Activated T-helper 1 cell treated with anti-CD3 and anti-CD28 coated beads, Interleukin-12 subunit alpha, Interleukin-12 subunit beta, Interleukin-2, Interleukin-4 antibody, amounts not matched to agents 30 ng/mL and 10 ng/mL and 1 ng/mL, durations not matched to agents 14 hours and 24 hours and 36 hours (primary cell): ENCODE measurements at regions of chr18 and their contacts with region 1.

Region 1: GRCh38 chr18:36067055-36067957 is at the start of gene RPRD1A:
- DNase-seq: peak; percentile 94
- H3K4me3 Mint-ChIP-seq: peak within 1 kb of the TSS; percentile 90
- H3K27ac Mint-ChIP-seq: peak within 1 kb of the TSS; percentile 91
- H3K4me1 Mint-ChIP-seq: peaks cover 31% of the 10 kb centered on the region
- H3K27me3 Mint-ChIP-seq: peaks cover 3% of the 10 kb centered on the region
- total RNA-seq, gene RPRD1A: 20.5 and 24.8 TPM in 2 replicates

Region 2: GRCh38 chr18:34857320-34857719 is 1210.0 kb before region 1 on chr18:
- intact Hi-C with region 1: loop called (anchors 1 kb)
- DNase-seq: no peak
- H3K4me3 Mint-ChIP-seq: no peak overlapping the region
- H3K27ac Mint-ChIP-seq: no peak overlapping the region
- H3K4me1 Mint-ChIP-seq: peaks cover 7% of the 10 kb centered on the region
- H3K27me3 Mint-ChIP-seq: peaks cover 43% of the 10 kb centered on the region

Region 3: DNA sequence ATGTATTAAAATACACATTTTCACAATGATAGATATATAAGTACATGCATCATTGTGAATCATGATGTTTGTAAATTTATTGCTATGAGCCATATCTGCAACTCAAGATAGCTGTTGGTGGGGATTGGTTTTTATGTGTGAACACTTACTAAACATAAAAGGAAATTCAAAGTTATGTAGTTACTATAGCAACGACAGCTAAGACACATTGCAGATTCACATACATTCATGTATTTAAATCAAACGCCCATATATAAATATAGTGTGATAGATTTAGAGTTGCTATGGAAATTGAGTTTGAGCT is 960.5 kb before region 1 on chr18:
- intact Hi-C with region 1: loop called (anchors 2 kb)
- DNase-seq: no peak
- H3K4me3 Mint-ChIP-seq: no peak overlapping the region
- H3K27ac Mint-ChIP-seq: no peak overlapping the region
- H3K4me1 Mint-ChIP-seq: peaks cover 18% of the 10 kb centered on the region
- H3K27me3 Mint-ChIP-seq: no peaks in the 10 kb centered on the region

Region 4: GRCh38 chr18:35478520-35479435 is 588.5 kb before region 1 on chr18:
- intact Hi-C with region 1: loop called (anchors 5 kb)
- DNase-seq: no peak
- H3K4me3 Mint-ChIP-seq: no peak overlapping the region
- H3K27ac Mint-ChIP-seq: peak overlapping the region; percentile 82
- H3K4me1 Mint-ChIP-seq: peaks cover 11% of the 10 kb centered on the region
- H3K27me3 Mint-ChIP-seq: no peaks in the 10 kb centered on the region

Region 5: DNA sequence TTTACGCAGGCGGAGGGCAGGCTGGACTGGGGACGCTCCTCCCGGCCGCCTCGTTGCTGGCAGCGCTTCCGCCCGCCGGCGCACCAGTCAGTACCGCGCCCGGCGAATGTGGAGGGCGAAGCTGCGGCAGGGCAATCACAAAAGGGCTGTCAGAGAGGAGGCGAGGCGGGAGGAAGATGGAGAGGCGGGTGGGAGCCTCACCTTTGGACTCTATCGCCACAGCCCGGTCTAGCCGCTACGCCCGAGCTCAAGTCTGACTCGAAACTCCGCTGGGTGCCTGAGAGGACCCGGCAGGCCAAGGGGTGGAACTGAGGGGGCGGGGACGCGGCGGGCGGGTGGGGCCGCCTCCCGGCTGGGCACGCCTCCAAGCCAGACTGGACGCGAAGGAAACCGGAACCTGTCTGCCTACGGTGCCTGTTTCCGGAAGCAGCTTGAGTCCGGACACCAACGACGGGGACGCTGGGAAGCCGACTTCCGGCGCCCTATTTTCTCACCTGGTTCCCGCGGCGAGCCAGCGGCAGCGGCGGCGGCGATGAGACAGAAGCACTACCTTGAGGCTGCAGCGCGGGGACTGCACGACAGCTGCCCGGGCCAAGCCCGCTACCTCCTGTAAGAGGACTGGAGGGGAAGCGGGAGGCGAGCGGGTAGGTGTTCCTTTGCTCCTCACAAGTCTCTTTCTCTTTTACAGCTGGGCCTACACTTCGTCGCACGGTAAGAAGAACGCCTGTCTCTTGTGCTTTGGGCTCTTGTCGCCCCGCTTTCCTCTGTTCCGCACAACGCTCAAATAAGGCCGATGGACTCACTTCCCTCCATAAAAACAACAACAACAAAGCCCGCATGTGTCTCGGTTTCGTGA is 94.9 kb before region 1 on chr18 and contains the start of gene RMP24:
- intact Hi-C with region 1: loop called (anchors 1 kb)
- DNase-seq: peak; percentile 90
- H3K4me3 Mint-ChIP-seq: peak within 1 kb of the TSS; percentile 98
- H3K27ac Mint-ChIP-seq: peak within 1 kb of the TSS; percentile 98
- H3K4me1 Mint-ChIP-seq: peaks cover 53% of the 10 kb centered on the region
- H3K27me3 Mint-ChIP-seq: no peaks in the 10 kb centered on the region

Region 6: GRCh38 chr18:36083729-36084128 is 16.4 kb after region 1 on chr18:
- intact Hi-C with region 1: loop called (anchors 1 kb)
- DNase-seq: no peak
- H3K4me3 Mint-ChIP-seq: no peak overlapping the region
- H3K27ac Mint-ChIP-seq: no peak overlapping the region
- H3K4me1 Mint-ChIP-seq: peaks cover 18% of the 10 kb centered on the region
- H3K27me3 Mint-ChIP-seq: peaks cover 10% of the 10 kb centered on the region

Region 7: DNA sequence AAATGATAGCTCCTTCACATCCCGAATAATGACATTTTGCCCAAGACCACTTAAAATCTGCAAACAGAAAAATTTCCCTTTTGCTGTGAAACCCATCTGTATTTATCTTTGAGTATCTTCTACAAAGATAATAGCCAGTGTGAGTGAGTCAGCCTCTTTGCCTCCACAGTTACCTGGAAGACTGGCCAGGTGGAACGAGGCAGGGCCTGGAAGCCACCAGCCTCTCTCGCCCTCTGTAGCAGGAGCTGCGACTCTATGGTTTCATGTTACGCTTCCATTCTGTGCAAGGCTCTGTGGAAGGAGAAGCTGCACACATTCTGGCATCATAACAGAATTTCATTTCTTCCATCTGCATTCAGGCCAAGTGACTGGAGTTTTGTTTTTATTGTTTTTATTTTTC is 71.9 kb after region 1 on chr18:
- intact Hi-C with region 1: no loop called
- DNase-seq: no peak
- H3K4me3 Mint-ChIP-seq: no peak overlapping the region
- H3K27ac Mint-ChIP-seq: no peak overlapping the region
- H3K4me1 Mint-ChIP-seq: peaks cover 17% of the 10 kb centered on the region
- H3K27me3 Mint-ChIP-seq: no peaks in the 10 kb centered on the region